Upper lobe of right lung (tissue), 1 donor: ENCODE measurements at regions of chr6 and their contacts with region 1.

Region 1: DNA sequence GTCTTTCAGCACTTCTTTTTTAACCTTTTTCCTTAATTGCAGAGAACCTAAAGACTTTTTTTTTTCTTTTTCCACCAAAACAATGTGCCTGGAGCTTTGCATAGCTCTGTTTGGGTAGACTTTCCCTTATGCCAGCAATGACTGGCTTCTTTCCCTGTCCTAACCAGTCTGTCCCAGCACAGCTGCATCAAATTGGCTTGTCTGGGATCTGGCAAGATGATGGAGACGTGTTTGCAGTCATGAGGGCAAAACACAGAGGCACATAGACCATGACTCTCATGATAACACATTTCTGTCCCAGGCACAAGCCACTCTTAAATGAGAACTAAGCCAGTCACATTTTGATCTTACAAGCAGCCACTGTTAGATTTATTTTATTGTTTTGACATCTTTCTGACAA is 16.5 kb downstream of the HEY2 start:
- DNase-seq: no peak
- ATAC-seq: no peak
- H3K4me3 ChIP-seq: no peak overlapping the region
- H3K27ac ChIP-seq: no peak overlapping the region
- H3K4me1 ChIP-seq: no peaks in the 10 kb centered on the region
- H3K27me3 ChIP-seq: peaks cover 13% of the 10 kb centered on the region
- CTCF ChIP-seq: no peak

Region 2: GRCh38 chr6:125314019-125314581 is 451.8 kb before region 1 on chr6:
- intact Hi-C with region 1: loop called (anchors 5 kb)
- DNase-seq: no peak
- ATAC-seq: peak; percentile 91
- H3K4me3 ChIP-seq: no peak overlapping the region
- H3K27ac ChIP-seq: no peak overlapping the region
- H3K4me1 ChIP-seq: no peaks in the 10 kb centered on the region
- H3K27me3 ChIP-seq: no peaks in the 10 kb centered on the region
- CTCF ChIP-seq: peak; percentile 77